K562 (cell line): ENCODE measurements at regions of chr5 and their contacts with region 1.

Region 1: DNA sequence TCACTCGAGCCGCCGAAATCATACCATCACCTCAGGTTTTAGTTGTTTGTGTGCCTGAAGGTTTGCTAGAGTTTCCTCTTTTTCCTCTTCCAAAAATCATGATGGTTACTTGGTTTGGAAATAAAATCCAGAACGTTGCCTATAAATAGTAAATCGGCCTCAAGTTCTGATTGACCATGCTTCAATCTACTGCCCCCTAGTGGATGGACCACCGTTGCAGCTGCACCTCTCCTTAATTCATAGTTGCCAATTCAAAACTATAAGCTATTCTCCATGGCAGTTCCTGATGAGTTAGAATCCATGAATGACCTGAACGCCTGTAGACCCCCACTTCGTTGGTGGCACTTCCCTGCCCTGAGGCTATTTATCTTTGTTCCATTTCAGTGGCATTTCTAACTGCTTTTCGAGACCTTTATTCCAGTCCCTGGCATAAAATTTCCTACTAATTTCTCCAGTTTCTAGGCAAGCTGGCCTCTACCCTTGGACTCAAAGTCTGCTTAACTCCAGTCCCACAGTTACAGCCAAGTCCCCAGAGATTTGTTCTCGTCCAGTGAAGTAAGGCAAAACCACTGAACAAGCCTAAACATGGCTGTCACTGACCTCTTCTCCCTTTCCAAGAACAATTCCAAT is 422.6 kb downstream of the EFNA5 start:
- DNase-seq: peak; percentile 43 to 51 (median 46)
- ATAC-seq: no peak
- H3K4me3 ChIP-seq: no peak overlapping the region
- H3K27ac ChIP-seq: no peak overlapping the region
- H3K4me1 ChIP-seq: no peaks in the 10 kb centered on the region
- H3K27me3 ChIP-seq: no peaks in the 10 kb centered on the region
- CTCF ChIP-seq: peak; percentile 31 to 67 (median 47); a peak in 5 of 6 replicates
- EP300 ChIP-seq: no peak
- POLR2A ChIP-seq: no peak
- RAD21 ChIP-seq: peak in 1 of 2 experiments; percentile 43; a peak in 2 of 4 replicates

Region 2: DNA sequence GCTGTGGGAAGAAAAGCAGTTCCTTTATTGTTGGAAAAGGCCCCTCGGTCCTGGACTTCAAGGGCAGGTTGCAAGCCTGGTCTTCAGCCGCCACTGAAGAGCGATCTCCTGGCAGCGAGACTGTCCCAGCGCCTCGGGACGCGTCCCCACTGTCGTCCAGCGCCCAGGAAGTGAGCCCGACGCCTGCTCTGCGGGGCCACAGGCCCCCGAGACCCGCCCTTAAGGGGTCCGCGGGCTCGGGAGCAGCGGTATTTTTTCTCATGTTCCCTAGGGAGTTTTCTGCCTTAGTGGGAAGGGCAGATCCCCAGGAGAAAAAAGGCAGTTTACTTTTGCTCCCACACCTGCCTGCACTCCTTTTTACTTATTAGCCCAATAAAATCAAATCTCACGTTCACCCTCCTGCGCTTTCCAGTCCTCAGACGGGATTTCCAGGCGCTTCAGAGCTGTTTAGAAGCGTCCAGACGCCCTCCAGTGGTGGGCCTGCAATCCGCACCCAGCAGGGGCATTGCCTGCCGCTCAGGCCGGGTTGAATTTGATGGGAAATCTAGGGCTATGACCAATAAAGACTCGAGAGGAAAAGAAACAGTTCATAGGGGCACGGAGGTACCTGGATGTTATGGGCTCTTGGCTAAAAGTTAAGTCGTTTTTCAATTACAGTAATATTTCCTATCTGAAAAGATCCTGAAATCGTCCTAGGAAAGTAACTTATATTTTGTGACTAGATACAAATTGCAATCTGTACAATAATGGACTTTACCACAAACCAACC is 425.4 kb after region 1 on chr5:
- CTCF ChIA-PET with region 1: no interaction called
- POLR2A ChIA-PET with region 1: no interaction called
- in situ Hi-C with region 1: no loop called
- intact Hi-C with region 1: loop called (anchors 10 kb)
- DNase-seq: peak; percentile 64 to 74 (median 66)
- ATAC-seq: peak; percentile 98
- H3K4me3 ChIP-seq: no peak overlapping the region
- H3K27ac ChIP-seq: no peak overlapping the region
- H3K4me1 ChIP-seq: peaks cover 0 to 10% of the 10 kb centered on the region in 2 experiments; a peak in 2 of 5 replicates
- H3K27me3 ChIP-seq: no peaks in the 10 kb centered on the region; a peak in 1 of 5 replicates
- CTCF ChIP-seq: peak; percentile 67 to 89 (median 68)
- EP300 ChIP-seq: no peak
- POLR2A ChIP-seq: no peak
- RAD21 ChIP-seq: peak; percentile 71 to 78